Activated CD4-positive, alpha-beta T cell treated with anti-CD3 and anti-CD28 coated beads, Interleukin-2, amount 10 ng/mL, durations not matched to agents 24 days and 14 days (primary cell): ENCODE measurements at regions of chr12 and their contacts with region 1.

Region 1: GRCh38 chr12:10190558-10191388 is 11.9 kb downstream of the TMEM52B start:
- DNase-seq: peak; percentile 83
- H3K4me3 Mint-ChIP-seq: no peak overlapping the region
- H3K27ac Mint-ChIP-seq: no peak overlapping the region
- H3K4me1 Mint-ChIP-seq: peaks cover 4% of the 10 kb centered on the region
- H3K27me3 Mint-ChIP-seq: peaks cover 24% of the 10 kb centered on the region

Region 2: DNA sequence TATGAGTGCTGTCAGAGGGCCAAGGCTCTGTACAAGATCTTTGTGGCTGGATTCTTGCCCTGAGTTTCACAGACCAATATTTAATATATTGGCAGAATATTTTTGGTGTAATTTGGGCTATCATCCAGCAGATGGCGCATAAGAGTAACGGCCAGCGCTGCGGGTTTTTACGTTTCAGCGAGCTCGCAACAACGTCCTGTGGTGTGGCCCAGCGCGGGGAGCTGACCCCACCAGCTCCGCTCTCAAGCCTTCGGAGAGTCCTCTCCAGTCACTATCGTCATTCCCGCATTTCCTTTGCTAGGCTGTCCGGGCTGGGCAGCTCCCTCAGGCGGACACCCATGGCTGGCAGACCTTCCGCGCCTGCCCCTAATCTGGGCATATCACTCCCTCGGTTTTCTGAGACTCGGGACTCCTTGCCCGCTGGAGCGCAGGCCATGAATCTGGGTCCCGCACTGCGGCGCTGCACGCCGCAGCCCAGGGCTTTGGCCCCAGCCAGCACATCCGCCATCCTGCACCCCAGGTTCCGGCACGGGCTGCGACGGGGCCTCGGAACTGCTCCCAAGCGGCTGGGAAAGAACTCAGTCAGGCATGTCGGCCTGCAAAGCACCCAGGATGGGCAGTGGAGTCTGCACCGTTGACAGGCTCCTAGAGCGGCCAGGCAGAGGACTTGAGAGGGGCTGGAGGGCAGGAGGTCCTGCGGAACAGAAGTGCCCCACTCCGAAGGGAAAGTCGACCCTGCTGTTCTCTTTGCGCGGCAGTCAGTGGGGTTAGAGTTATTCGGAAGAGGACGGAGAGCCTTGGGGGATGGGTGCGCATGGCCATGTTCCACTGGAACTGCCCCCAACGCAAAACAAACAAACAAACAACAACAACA is 37.3 kb before region 1 on chr12:
- intact Hi-C with region 1: loop called (anchors 1 kb)
- DNase-seq: peak; percentile 88
- H3K4me3 Mint-ChIP-seq: peak overlapping the region; percentile 92
- H3K27ac Mint-ChIP-seq: no peak overlapping the region
- H3K4me1 Mint-ChIP-seq: peaks cover 9% of the 10 kb centered on the region
- H3K27me3 Mint-ChIP-seq: peaks cover 47% of the 10 kb centered on the region